Pancreas (tissue), 10 donors: ENCODE measurements at regions of chr2 and their contacts with region 1.

Region 1: DNA sequence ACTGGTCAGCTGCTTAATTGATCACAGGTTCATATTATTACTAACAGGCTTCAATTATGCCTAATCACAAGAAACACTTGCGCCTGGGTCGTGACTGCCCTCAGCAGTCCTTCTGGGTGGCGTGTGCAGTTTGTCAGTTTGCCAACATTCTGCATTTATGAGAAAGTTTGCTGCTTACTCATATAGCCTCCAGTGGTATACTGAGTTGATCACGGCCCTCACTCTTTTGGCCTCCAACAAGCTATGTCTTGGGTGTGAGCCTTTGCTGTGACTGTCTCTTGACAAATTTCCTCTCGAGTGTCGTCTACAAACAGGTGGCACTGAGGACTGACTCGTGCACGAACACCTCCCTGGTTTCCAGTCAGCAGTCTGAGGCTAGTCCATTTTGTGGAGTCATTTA is 27.3 kb downstream of the DCDC2C start:
- DNase-seq: no peak
- ATAC-seq: no peak
- H3K4me3 ChIP-seq: no peak overlapping the region
- H3K27ac ChIP-seq: no peak overlapping the region
- H3K4me1 ChIP-seq: peaks cover 0 to 2% (median 0%) of the 10 kb centered on the region in 3 donors
- H3K27me3 ChIP-seq: no peaks in the 10 kb centered on the region
- CTCF ChIP-seq: no peak

Region 2: DNA sequence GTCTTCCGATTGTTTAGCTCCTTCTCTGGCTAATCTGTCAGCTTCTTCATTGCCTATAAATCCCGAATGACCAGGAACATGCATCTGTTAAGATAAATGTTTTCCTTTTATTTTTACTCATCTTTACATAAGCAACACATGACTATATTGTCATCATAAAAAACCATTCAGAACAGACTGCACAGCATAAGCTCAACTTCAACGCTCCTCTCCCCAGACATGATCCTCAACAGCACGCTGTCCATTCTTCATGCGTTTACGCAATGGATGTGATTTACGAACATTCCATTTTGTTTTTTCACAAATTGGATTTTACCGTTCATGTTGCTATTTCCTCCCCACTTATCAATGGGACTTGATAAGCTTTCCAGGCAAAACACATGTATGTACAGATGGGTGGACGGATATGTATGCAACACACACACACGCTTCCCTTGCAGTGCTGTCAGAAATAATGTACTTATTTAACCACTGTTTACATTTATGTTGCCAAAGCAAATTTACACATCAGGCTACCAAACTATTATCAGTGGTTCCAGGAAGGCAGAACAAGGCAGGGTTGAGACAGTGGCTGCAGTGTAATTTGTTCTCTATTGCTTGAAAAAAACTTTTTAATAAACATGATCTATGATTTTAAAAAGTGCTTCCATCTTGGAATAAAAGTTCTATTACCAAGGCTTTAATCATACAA is 184.7 kb before region 1 on chr2:
- intact Hi-C with region 1: no loop called
- DNase-seq: no peak
- ATAC-seq: no peak
- H3K4me3 ChIP-seq: no peak overlapping the region
- H3K27ac ChIP-seq: no peak overlapping the region
- H3K4me1 ChIP-seq: no peaks in the 10 kb centered on the region
- H3K27me3 ChIP-seq: no peaks in the 10 kb centered on the region
- CTCF ChIP-seq: no peak

Region 3: GRCh38 chr2:3830796-3831195 is 100.2 kb after region 1 on chr2:
- intact Hi-C with region 1: loop called in 1 of 3 experiments (anchors 5 kb)
- DNase-seq: no peak
- ATAC-seq: no peak
- H3K4me3 ChIP-seq: no peak overlapping the region
- H3K27ac ChIP-seq: no peak overlapping the region
- H3K4me1 ChIP-seq: no peaks in the 10 kb centered on the region
- H3K27me3 ChIP-seq: no peaks in the 10 kb centered on the region
- CTCF ChIP-seq: no peak